PC-3 (cell line): ENCODE measurements at regions of chr1 and their contacts with region 1.

Region 1: GRCh38 chr1:8727809-8728213 is 89.6 kb downstream of the RERE start:
- DNase-seq: no peak
- ATAC-seq: no peak
- H3K4me3 ChIP-seq: no peak overlapping the region
- H3K27ac ChIP-seq: no peak overlapping the region
- H3K4me1 ChIP-seq: 0 out of 2 replicates have a peak, but pooled peaks cover 4% of the 10 kb centered on the region
- H3K27me3 ChIP-seq: no peaks in the 10 kb centered on the region
- CTCF ChIP-seq: no peak

Region 2: DNA sequence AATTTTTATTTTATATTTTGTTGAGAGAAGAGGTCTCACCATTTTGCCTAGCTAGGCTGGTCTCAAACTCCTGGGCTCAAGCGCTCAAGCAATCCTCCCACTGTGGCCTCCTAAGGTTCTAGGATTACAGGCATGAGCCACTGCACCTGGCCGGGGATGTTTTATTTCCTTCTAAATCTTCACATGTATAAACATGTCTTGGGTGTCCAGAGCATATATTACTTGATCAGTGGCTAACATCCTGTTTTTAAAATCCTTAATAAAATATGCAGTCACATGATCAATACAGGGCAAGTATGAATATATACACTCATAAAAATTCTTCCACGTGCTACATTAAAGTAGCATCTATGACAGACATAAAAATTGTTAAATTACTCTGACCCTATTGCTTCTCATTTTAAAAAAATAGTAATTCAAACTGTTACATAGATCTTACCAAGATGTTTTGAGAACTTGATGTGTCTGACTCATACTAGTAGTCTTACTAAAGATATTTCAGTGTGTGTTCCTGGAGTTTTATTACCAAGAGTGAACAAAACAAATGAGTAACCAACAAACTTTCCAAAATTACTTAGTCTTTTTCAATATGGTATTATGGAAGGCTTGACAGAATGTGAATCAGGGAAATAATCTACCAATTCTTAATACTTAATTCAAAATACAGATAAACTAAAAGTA is 187.4 kb before region 1 on chr1:
- CTCF ChIA-PET with region 1: no interaction called
- POLR2A ChIA-PET with region 1: no interaction called
- intact Hi-C with region 1: no loop called
- DNase-seq: peak; percentile 53
- ATAC-seq: peak; percentile 81
- H3K4me3 ChIP-seq: no peak overlapping the region
- H3K27ac ChIP-seq: peak overlapping the region; percentile 58
- H3K4me1 ChIP-seq: peaks cover 24% of the 10 kb centered on the region
- H3K27me3 ChIP-seq: no peaks in the 10 kb centered on the region
- CTCF ChIP-seq: no peak

Region 3: DNA sequence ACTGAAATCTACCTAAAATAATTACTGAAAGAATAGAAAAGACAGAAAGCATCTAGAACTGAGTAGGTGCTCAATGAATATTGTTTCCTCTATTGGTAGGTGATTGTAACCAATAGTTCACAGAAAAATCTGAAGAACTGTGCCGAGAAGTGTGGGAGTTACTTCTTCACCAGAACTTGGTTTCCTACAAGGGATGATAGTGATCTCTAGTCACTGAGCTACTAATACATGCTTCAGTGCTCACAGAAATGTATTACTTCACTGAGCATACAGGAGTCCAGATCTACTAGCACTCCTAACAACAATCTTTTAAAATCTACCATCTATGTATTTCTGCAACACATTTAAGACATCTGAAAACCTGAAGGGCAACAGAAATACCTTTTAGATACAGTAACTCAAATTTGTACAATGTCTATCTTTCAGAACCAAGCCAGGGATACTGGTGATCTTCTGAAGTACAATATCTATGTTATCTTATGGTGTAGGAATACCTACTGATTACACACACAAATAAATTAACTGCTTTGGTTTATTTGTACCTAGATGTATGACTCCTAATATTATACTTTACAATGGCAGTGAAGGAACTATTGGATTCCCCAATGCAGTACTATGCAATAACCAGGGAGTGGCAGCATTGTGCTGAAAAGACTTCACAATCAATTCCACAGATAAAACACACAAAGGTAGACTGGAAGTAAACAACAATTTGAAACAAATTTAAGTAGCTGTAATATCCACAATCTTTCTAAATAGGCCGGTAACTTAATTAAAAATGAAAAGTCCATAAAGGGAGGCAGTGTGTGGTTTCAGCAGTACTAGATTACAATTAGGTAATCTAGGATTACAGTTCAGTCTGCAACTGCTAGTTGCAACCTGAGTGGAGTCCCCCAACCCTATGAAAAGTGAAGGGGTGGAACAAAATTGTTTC is 166.9 kb before region 1 on chr1:
- CTCF ChIA-PET with region 1: interaction called, 3 read pairs
- POLR2A ChIA-PET with region 1: interaction called, 4 read pairs
- intact Hi-C with region 1: loop called (anchors 1 kb)
- DNase-seq: peak; percentile 64
- ATAC-seq: peak; percentile 68
- H3K4me3 ChIP-seq: no peak overlapping the region
- H3K27ac ChIP-seq: no peak overlapping the region
- H3K4me1 ChIP-seq: peaks cover 14% of the 10 kb centered on the region
- H3K27me3 ChIP-seq: no peaks in the 10 kb centered on the region
- CTCF ChIP-seq: peak; percentile 94

Region 4: GRCh38 chr1:8604041-8604945 is 123.5 kb before region 1 on chr1:
- CTCF ChIA-PET with region 1: interaction called, 10 read pairs
- POLR2A ChIA-PET with region 1: interaction called, 3 read pairs
- intact Hi-C with region 1: no loop called
- DNase-seq: no peak
- ATAC-seq: no peak
- H3K4me3 ChIP-seq: no peak overlapping the region
- H3K27ac ChIP-seq: no peak overlapping the region
- H3K4me1 ChIP-seq: 0 out of 2 replicates have a peak, but pooled peaks cover 5% of the 10 kb centered on the region
- H3K27me3 ChIP-seq: no peaks in the 10 kb centered on the region
- CTCF ChIP-seq: no peak

Region 5: GRCh38 chr1:8689431-8690252 is 38.2 kb before region 1 on chr1:
- CTCF ChIA-PET with region 1: no interaction called
- POLR2A ChIA-PET with region 1: no interaction called
- intact Hi-C with region 1: no loop called
- DNase-seq: no peak
- ATAC-seq: no peak
- H3K4me3 ChIP-seq: no peak overlapping the region
- H3K27ac ChIP-seq: no peak overlapping the region
- H3K4me1 ChIP-seq: 0 out of 2 replicates have a peak, but pooled peaks cover 9% of the 10 kb centered on the region
- H3K27me3 ChIP-seq: no peaks in the 10 kb centered on the region
- CTCF ChIP-seq: no peak

Region 6: GRCh38 chr1:8789314-8790214 is 61.8 kb after region 1 on chr1:
- CTCF ChIA-PET with region 1: interaction called, 16 read pairs
- POLR2A ChIA-PET with region 1: no interaction called
- intact Hi-C with region 1: no loop called
- DNase-seq: peak; percentile 79
- ATAC-seq: peak; percentile 19
- H3K4me3 ChIP-seq: peak overlapping the region; percentile 2; the same call in 1 of the 2 replicates
- H3K27ac ChIP-seq: peak overlapping the region; percentile 64
- H3K4me1 ChIP-seq: peaks cover 39% of the 10 kb centered on the region
- H3K27me3 ChIP-seq: no peaks in the 10 kb centered on the region
- CTCF ChIP-seq: no peak

Region 7: GRCh38 chr1:8848663-8849386 is 121.0 kb after region 1 on chr1:
- CTCF ChIA-PET with region 1: interaction called, 19 read pairs
- POLR2A ChIA-PET with region 1: no interaction called
- intact Hi-C with region 1: loop called (anchors 1 kb)
- DNase-seq: peak; percentile 91
- ATAC-seq: peak; percentile 98
- H3K4me3 ChIP-seq: no peak overlapping the region
- H3K27ac ChIP-seq: no peak overlapping the region
- H3K4me1 ChIP-seq: peaks cover 5% of the 10 kb centered on the region
- H3K27me3 ChIP-seq: no peaks in the 10 kb centered on the region
- CTCF ChIP-seq: peak; percentile 73